IMR-90 (cell line): ENCODE measurements at regions of chr17 and their contacts with region 1.

Region 1: DNA sequence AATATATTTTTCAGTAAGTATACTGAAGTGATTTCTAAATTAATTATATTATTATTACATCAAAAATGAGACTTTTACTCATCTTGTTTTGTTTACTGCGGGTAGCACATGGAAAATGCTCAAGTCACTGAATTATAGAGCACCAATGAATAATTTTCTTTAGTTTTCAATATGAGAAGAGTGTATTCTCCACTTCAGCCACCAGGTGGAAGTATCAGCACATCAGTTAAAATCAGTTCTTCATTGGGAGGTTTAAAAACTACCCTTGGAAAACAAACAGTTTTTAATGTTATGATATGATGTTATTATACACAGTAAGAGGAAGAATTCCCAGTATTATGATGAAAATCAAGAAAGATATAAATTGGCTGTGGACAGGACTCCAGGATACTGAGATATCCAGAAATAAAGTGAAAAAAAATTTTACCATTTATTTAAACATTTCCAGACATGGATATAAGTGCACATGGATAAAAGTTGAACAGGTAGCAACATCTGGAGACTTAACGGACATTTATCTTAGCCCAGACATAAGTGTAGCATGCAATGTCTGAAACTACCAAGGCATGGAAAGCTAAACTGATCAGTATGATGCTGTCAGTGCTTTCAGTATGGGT is 467.3 kb downstream of the KCNJ2 start:
- DNase-seq: peak; percentile 46
- ATAC-seq: peak; percentile 70
- H3K4me3 ChIP-seq: no peak overlapping the region
- H3K27ac ChIP-seq: no peak overlapping the region
- H3K4me1 ChIP-seq: no peaks in the 10 kb centered on the region
- H3K27me3 ChIP-seq: peaks cover 7% of the 10 kb centered on the region; the same call in 1 of the 2 replicates
- CTCF ChIP-seq: peak; percentile 73
- POLR2A ChIP-seq: no peak
- RAD21 ChIP-seq: peak; percentile 79

Region 2: GRCh38 chr17:70332356-70333210 is 304.0 kb before region 1 on chr17:
- CTCF ChIA-PET with region 1: no interaction called
- POLR2A ChIA-PET with region 1: no interaction called
- dilution Hi-C with region 1: no loop called
- in situ Hi-C with region 1: no loop called
- intact Hi-C with region 1: no loop called
- DNase-seq: no peak
- ATAC-seq: no peak
- H3K4me3 ChIP-seq: no peak overlapping the region
- H3K27ac ChIP-seq: no peak overlapping the region
- H3K4me1 ChIP-seq: no peaks in the 10 kb centered on the region
- H3K27me3 ChIP-seq: no peaks in the 10 kb centered on the region
- CTCF ChIP-seq: no peak
- POLR2A ChIP-seq: no peak
- RAD21 ChIP-seq: no peak

Region 3: GRCh38 chr17:71084219-71084618 is 447.6 kb after region 1 on chr17:
- CTCF ChIA-PET with region 1: no interaction called
- POLR2A ChIA-PET with region 1: no interaction called
- dilution Hi-C with region 1: no loop called
- in situ Hi-C with region 1: no loop called
- intact Hi-C with region 1: loop called (anchors 5 kb)
- DNase-seq: peak; percentile 22
- ATAC-seq: peak; percentile 53
- H3K4me3 ChIP-seq: no peak overlapping the region
- H3K27ac ChIP-seq: no peak overlapping the region
- H3K4me1 ChIP-seq: no peaks in the 10 kb centered on the region
- H3K27me3 ChIP-seq: no peaks in the 10 kb centered on the region
- CTCF ChIP-seq: peak; percentile 45
- POLR2A ChIP-seq: no peak
- RAD21 ChIP-seq: peak; percentile 47